Panc1 (cell line): ENCODE measurements at regions of chr3 and their contacts with region 1.

Region 1: GRCh38 chr3:16884084-16884747 is 539 bp upstream of the PLCL2 start:
- DNase-seq: no peak
- ATAC-seq: peak; percentile 82
- H3K4me3 ChIP-seq: peak overlapping the region; percentile 56 to 58
- H3K27ac ChIP-seq: no peak overlapping the region
- H3K4me1 ChIP-seq: no peaks in the 10 kb centered on the region
- H3K27me3 ChIP-seq: no peaks in the 10 kb centered on the region; the same call in 1 of the 2 replicates
- CTCF ChIP-seq: peak; percentile 81

Region 2: GRCh38 chr3:17032407-17033034 is 148.3 kb after region 1 on chr3:
- CTCF ChIA-PET with region 1: no interaction called
- POLR2A ChIA-PET with region 1: no interaction called
- in situ Hi-C with region 1: no loop called
- intact Hi-C with region 1: loop called (anchors 5 kb)
- DNase-seq: no peak
- ATAC-seq: peak; percentile 84; the same call in 1 of the 2 replicates
- H3K4me3 ChIP-seq: no peak overlapping the region
- H3K27ac ChIP-seq: no peak overlapping the region
- H3K4me1 ChIP-seq: no peaks in the 10 kb centered on the region
- H3K27me3 ChIP-seq: no peaks in the 10 kb centered on the region
- CTCF ChIP-seq: peak; percentile 63; the same call in 1 of the 2 replicates